A549 (cell line): ENCODE measurements at regions of chr7 and their contacts with region 1.

Region 1: DNA sequence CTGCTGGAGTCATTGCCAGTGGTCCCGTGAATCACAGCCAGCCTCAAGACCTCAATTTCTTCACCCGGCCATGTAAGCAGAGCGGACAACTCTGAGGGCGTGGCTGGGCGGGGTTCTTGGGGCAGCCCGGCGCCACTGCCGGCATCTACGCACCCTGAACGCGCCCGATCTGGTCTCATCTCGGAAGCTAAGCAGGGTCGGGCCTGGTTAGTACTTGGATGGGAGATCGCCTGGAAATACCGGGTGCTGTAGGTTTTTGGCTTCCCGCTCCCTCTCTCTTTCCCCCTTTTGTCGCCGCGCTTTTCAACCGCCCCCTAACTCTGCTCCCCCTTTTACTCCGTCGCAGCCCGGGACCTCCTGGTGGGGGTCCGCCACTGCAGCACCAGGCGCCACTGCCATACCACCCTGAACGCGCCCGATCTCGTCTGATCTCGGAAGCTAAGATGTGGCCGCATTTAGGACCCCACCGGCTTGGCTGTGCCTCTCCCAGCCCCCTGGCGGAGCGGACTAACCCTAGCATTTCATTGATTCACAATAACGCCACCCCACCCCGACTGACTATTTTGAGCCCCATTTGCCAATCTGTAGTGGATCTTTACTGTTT is 25.3 kb downstream of the GARIN1A start:
- DNase-seq: peak; percentile 80 to 87
- ATAC-seq: peak; percentile 90 to 94
- H3K4me3 ChIP-seq: peak overlapping the region; percentile 50
- H3K27ac ChIP-seq: peak overlapping the region; percentile 56 to 84
- H3K4me1 ChIP-seq: no peaks in the 10 kb centered on the region
- CTCF ChIP-seq: 0 out of 3 replicates have a peak, but pooled peaks have one; percentile 22
- EP300 ChIP-seq: no peak
- POLR2A ChIP-seq: no peak
- RAD21 ChIP-seq: peak in 1 of 2 experiments; percentile 10; a peak in 2 of 5 replicates

Region 2: DNA sequence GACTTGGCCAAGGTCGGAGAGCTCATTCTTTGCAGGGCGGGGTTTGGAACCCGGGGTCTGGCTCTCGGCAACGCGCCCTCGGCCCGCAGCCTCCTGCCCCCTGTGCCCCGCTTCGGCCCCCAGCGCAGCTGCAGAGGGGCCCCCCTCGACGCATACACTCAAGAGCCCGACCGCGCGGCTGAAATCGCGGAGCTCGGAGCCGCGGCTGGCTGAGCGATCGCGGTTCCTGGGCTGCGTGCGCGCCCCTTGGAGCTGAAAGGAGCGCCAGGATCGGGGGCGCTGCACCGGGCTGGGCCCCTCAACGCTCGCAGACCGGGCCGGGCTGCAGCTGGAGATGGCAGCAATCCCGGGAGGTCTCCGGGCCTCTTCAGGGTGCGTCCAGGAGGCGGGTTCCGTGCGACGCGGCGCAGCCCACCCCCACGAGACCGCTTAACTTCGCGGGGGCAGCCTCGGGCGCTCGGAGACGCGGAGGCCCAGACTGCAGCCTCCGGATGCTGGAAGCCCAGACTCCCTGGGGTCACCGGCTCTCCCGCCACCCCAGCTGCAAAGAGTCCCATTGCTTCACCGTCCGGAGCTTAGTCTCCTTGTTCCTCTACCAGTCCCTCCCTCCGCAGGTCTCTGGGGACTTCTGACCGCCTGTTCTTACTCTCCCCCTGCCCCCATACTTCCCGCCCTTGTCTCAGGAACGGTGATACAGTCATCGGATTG is 593.2 kb before region 1 on chr7:
- CTCF ChIA-PET with region 1: no interaction called
- POLR2A ChIA-PET with region 1: no interaction called
- DNase-seq: no peak
- ATAC-seq: peak in 1 of 2 experiments; percentile 23; a peak in 3 of 6 replicates
- H3K4me3 ChIP-seq: peak overlapping the region; percentile 39
- H3K27ac ChIP-seq: peak overlapping the region in 1 of 2 experiments; percentile 53; a peak in 3 of 6 replicates
- H3K4me1 ChIP-seq: peaks cover 4% of the 10 kb centered on the region; the same call in 1 of the 3 replicates
- CTCF ChIP-seq: no peak
- EP300 ChIP-seq: no peak
- POLR2A ChIP-seq: no peak
- RAD21 ChIP-seq: no peak

Region 3: DNA sequence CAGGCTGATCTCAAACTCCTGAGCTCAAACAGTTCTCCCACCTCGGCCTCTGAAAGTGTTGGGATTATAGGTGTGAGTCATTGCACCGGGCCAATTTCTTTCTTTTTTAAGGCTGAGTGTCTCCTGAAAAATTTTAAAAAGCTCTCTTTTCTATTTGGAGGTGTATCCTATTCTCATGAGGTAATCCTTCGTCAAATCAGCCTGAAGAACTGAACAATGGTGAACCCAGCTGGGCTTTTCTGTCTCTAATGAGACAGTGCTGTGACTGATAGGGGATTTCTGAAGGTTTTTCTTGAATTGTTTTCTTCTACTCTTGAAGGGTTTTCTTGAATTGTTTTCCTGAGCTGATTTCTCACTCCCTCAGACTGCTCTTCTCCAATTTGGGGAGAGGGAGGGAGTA is 10.8 kb after region 1 on chr7:
- CTCF ChIA-PET with region 1: interaction called, 11 read pairs
- POLR2A ChIA-PET with region 1: no interaction called
- DNase-seq: no peak
- ATAC-seq: no peak
- H3K4me3 ChIP-seq: no peak overlapping the region
- H3K27ac ChIP-seq: no peak overlapping the region
- H3K4me1 ChIP-seq: no peaks in the 10 kb centered on the region
- CTCF ChIP-seq: no peak
- EP300 ChIP-seq: no peak
- POLR2A ChIP-seq: no peak
- RAD21 ChIP-seq: no peak

Region 4: GRCh38 chr7:128791121-128791961 is 93.9 kb after region 1 on chr7:
- CTCF ChIA-PET with region 1: no interaction called
- POLR2A ChIA-PET with region 1: no interaction called
- DNase-seq: peak; percentile 41 to 70
- ATAC-seq: peak; percentile 83 to 91
- H3K4me3 ChIP-seq: peak overlapping the region; percentile 83
- H3K27ac ChIP-seq: peak overlapping the region; percentile 77 to 92
- H3K4me1 ChIP-seq: 0 out of 3 replicates have a peak, but pooled peaks cover 9% of the 10 kb centered on the region
- CTCF ChIP-seq: no peak
- EP300 ChIP-seq: no peak
- POLR2A ChIP-seq: no peak; the same call in 1 of the 2 replicates
- RAD21 ChIP-seq: no peak

Region 5: GRCh38 chr7:128869138-128869943 is 171.9 kb after region 1 on chr7:
- CTCF ChIA-PET with region 1: no interaction called
- POLR2A ChIA-PET with region 1: no interaction called
- DNase-seq: peak in 1 of 2 experiments; percentile 30
- ATAC-seq: peak; percentile 78 to 84
- H3K4me3 ChIP-seq: peak overlapping the region; percentile 47
- H3K27ac ChIP-seq: peak overlapping the region; percentile 46 to 84
- H3K4me1 ChIP-seq: peaks cover 9% of the 10 kb centered on the region; the same call in 2 of the 3 replicates
- CTCF ChIP-seq: peak; percentile 20; the same call in 2 of the 3 replicates
- EP300 ChIP-seq: no peak
- POLR2A ChIP-seq: peak; percentile 16; the same call in 1 of the 2 replicates
- RAD21 ChIP-seq: no peak

Region 6: GRCh38 chr7:129073738-129074137 is 376.3 kb after region 1 on chr7:
- CTCF ChIA-PET with region 1: no interaction called
- POLR2A ChIA-PET with region 1: no interaction called
- DNase-seq: no peak
- ATAC-seq: no peak
- H3K4me3 ChIP-seq: no peak overlapping the region
- H3K27ac ChIP-seq: no peak overlapping the region
- H3K4me1 ChIP-seq: no peaks in the 10 kb centered on the region
- CTCF ChIP-seq: no peak
- EP300 ChIP-seq: no peak
- POLR2A ChIP-seq: no peak
- RAD21 ChIP-seq: no peak